Caco-2 (cell line): ENCODE measurements at regions of chr13 and their contacts with region 1.

Region 1: GRCh38 chr13:27374650-27375049 is 49.8 kb upstream of the GTF3A start:
- DNase-seq: peak; percentile 75 to 82
- H3K4me3 ChIP-seq: no peak overlapping the region
- H3K4me3 Mint-ChIP-seq: no peak overlapping the region
- H3K27ac Mint-ChIP-seq: no peak overlapping the region
- H3K4me1 ChIP-seq: peaks cover 11% of the 10 kb centered on the region; the same call in 1 of the 2 replicates
- H3K4me1 Mint-ChIP-seq: peaks cover 23% of the 10 kb centered on the region
- H3K27me3 ChIP-seq: no peaks in the 10 kb centered on the region
- H3K27me3 Mint-ChIP-seq: no peaks in the 10 kb centered on the region
- CTCF ChIP-seq: peak; percentile 61 to 90

Region 2: DNA sequence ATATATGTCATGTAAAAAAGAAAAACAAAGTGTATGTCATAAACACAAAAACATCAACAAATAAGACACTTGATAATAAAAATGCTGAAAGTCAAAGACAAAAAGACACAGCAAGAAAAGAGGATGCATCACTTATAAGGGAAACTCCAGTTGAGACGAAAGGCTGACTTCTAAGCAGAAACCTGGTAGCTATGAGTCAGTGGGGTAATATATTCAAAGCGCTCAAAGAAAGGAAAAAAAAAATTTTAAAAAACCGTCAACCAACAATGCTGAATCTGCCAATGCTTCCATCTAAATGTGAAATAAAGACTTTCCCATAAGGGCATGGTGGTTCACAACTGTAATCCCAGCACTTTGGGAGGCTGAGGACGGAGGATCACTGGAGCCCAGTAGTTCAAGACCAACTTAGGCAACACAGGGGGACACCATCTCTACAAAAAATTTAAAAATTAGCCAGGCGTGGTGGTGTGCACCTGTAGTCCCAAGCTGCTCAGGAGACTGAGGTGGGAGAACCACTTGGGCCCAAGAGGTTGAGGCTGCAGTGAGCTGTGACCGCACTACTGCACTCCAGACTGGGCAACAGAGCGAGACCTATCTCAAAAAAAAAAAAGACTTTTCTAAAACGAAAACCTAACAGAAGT is 227.0 kb before region 1 on chr13:
- CTCF ChIA-PET with region 1: no interaction called
- POLR2A ChIA-PET with region 1: no interaction called
- intact Hi-C with region 1: no loop called
- DNase-seq: no peak
- H3K4me3 ChIP-seq: no peak overlapping the region
- H3K4me3 Mint-ChIP-seq: no peak overlapping the region
- H3K27ac Mint-ChIP-seq: no peak overlapping the region
- H3K4me1 ChIP-seq: peaks cover 7% of the 10 kb centered on the region
- H3K4me1 Mint-ChIP-seq: peaks cover 12% of the 10 kb centered on the region
- H3K27me3 ChIP-seq: no peaks in the 10 kb centered on the region
- H3K27me3 Mint-ChIP-seq: no peaks in the 10 kb centered on the region
- CTCF ChIP-seq: no peak

Region 3: GRCh38 chr13:27424246-27425157 is 49.9 kb after region 1 on chr13 and contains the start of gene GTF3A:
- CTCF ChIA-PET with region 1: interaction called, 10 read pairs
- POLR2A ChIA-PET with region 1: no interaction called
- intact Hi-C with region 1: no loop called
- DNase-seq: peak; percentile 81 to 93
- H3K4me3 ChIP-seq: peak within 1 kb of the TSS; percentile 87
- H3K4me3 Mint-ChIP-seq: peak within 1 kb of the TSS; percentile 87
- H3K27ac Mint-ChIP-seq: peak within 1 kb of the TSS; percentile 88
- H3K4me1 ChIP-seq: peaks cover 8% of the 10 kb centered on the region
- H3K4me1 Mint-ChIP-seq: peaks cover 16% of the 10 kb centered on the region
- H3K27me3 ChIP-seq: no peaks in the 10 kb centered on the region
- H3K27me3 Mint-ChIP-seq: no peaks in the 10 kb centered on the region
- CTCF ChIP-seq: no peak
- total RNA-seq, gene GTF3A: 132 and 141 TPM in 2 replicates

Region 4: DNA sequence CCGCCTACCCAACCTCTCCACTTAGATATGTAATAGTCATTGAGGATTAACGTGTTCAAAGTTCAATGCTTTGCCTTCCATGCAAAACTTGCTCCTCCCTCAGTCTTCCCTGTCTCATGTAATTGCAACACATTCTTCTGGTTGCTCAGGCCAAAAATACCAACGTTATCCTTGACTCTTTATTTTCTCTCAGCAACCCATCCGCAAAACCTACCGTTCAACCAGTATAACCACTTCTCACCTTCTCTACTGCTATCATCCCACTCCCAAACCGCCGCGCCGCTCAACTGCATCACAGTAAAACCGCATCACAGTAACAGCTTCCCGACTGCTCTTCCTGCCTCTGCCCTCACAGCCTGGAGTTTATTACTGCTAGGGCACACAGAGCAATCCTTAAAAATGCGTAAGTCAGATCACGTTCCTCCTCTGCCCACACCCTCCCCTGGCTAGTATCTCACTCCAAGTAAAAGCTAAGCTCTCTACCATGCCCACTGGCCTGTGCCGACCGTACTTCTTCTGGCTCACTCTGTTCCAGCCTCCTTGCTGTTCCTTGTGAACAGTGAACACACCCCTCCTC is 67.5 kb after region 1 on chr13:
- CTCF ChIA-PET with region 1: interaction called, 12 read pairs
- POLR2A ChIA-PET with region 1: no interaction called
- intact Hi-C with region 1: no loop called
- DNase-seq: peak; percentile 73 to 83
- H3K4me3 ChIP-seq: peak overlapping the region; percentile 23
- H3K4me3 Mint-ChIP-seq: peak overlapping the region; percentile 68
- H3K27ac Mint-ChIP-seq: peak overlapping the region; percentile 81
- H3K4me1 ChIP-seq: peaks cover 26% of the 10 kb centered on the region
- H3K4me1 Mint-ChIP-seq: peaks cover 26% of the 10 kb centered on the region
- H3K27me3 ChIP-seq: no peaks in the 10 kb centered on the region
- H3K27me3 Mint-ChIP-seq: no peaks in the 10 kb centered on the region
- CTCF ChIP-seq: no peak

Region 5: DNA sequence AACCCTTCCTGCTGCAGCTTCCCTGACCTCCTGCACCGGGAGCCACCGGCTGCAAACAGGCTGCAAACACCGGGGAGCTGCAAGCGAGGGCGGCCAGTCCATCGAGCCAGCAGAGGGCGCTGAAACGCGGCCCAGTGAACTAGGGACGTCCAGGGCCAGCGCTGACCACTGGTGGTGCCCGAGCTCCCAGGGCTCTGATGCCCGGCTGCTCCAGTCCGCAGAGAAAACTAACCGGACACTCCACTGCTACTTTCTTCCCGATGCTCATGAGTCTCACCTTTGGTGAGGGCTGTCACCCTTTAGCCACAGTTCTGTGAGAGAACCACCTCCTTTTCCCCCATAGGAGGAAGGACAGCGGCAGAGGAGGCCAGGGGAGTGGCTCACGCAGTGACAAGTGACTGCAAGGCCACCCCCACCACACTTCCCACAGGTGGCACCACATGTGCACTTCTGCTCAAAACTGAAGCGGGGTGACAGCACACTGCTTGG is 158.5 kb after region 1 on chr13:
- CTCF ChIA-PET with region 1: no interaction called
- POLR2A ChIA-PET with region 1: no interaction called
- intact Hi-C with region 1: loop called (anchors 1 kb)
- DNase-seq: peak; percentile 72 to 87
- H3K4me3 ChIP-seq: no peak overlapping the region
- H3K4me3 Mint-ChIP-seq: no peak overlapping the region
- H3K27ac Mint-ChIP-seq: no peak overlapping the region
- H3K4me1 ChIP-seq: peaks cover 9% of the 10 kb centered on the region
- H3K4me1 Mint-ChIP-seq: peaks cover 11% of the 10 kb centered on the region
- H3K27me3 ChIP-seq: no peaks in the 10 kb centered on the region
- H3K27me3 Mint-ChIP-seq: no peaks in the 10 kb centered on the region
- CTCF ChIP-seq: peak; percentile 89 to 98

Region 6: DNA sequence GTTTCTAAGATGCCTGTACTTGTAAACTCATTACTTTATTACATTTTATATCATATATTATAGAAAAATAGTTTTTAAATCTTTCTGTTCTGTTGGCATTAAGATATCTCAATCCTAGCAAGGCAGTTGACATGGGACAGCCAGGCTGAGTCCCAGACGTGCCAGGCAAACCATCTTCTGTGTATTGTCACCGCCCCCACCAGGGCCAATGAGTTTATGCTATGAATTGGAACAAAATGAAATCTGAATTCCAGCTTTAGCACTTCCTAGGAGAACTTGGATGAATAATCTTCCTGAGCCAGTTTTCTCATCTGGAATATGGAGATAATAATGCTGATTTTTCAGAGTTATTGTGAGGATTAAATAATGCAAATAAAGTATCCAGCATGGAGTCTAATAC is 337.8 kb after region 1 on chr13:
- CTCF ChIA-PET with region 1: no interaction called
- POLR2A ChIA-PET with region 1: no interaction called
- intact Hi-C with region 1: loop called (anchors 2 kb)
- DNase-seq: peak in 1 of 2 experiments; percentile 30
- H3K4me3 ChIP-seq: no peak overlapping the region
- H3K4me3 Mint-ChIP-seq: no peak overlapping the region
- H3K27ac Mint-ChIP-seq: no peak overlapping the region
- H3K4me1 ChIP-seq: no peaks in the 10 kb centered on the region
- H3K4me1 Mint-ChIP-seq: no peaks in the 10 kb centered on the region
- H3K27me3 ChIP-seq: no peaks in the 10 kb centered on the region
- H3K27me3 Mint-ChIP-seq: peaks cover 2% of the 10 kb centered on the region
- CTCF ChIP-seq: peak; percentile 42 to 47

Region 7: DNA sequence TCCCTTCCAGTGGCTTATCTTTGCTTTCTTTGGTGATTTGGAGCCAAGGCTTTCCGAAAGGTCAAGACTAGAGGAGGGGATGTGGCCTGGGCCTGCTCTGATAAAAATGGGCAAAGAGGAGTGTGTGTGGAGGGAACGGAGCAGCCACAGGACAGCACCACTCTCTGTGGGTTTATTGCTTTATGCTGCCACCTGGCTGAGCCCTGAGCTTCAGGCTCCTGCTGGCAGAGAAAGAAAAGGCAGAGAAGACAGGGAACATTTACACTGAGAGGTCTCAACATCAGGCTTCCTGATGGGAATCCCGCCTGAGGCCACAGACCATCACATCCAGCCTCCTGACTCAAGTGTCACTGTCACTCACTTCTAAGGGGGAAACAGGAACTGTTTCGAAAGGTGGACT is 408.5 kb after region 1 on chr13:
- CTCF ChIA-PET with region 1: no interaction called
- POLR2A ChIA-PET with region 1: no interaction called
- intact Hi-C with region 1: loop called (anchors 5 kb)
- DNase-seq: peak in 1 of 2 experiments; percentile 32
- H3K4me3 ChIP-seq: no peak overlapping the region
- H3K4me3 Mint-ChIP-seq: no peak overlapping the region
- H3K27ac Mint-ChIP-seq: no peak overlapping the region
- H3K4me1 ChIP-seq: peaks cover 5% of the 10 kb centered on the region; the same call in 1 of the 2 replicates
- H3K4me1 Mint-ChIP-seq: peaks cover 6% of the 10 kb centered on the region
- H3K27me3 ChIP-seq: no peaks in the 10 kb centered on the region
- H3K27me3 Mint-ChIP-seq: peaks cover 15% of the 10 kb centered on the region
- CTCF ChIP-seq: peak; percentile 23 to 41